ENCODE measurements at regions of chr9 and their contacts with region 1.

Region 1: GRCh38 chr9:92308893-92309292 is 15.4 kb upstream of the IARS1 start:
- DNase-seq: no peak
- ATAC-seq: no peak
- H3K4me3 ChIP-seq: no peak overlapping the region
- H3K27ac ChIP-seq: no peak overlapping the region
- H3K4me1 ChIP-seq: peaks cover 0 to 17% (median 11%) of the 10 kb centered on the region in 12 donors
- H3K27me3 ChIP-seq: no peaks in the 10 kb centered on the region
- CTCF ChIP-seq: no peak
- POLR2A ChIP-seq: no peak

Region 2: GRCh38 chr9:92254381-92255337 is 54.2 kb before region 1 on chr9:
- intact Hi-C with region 1: loop called in 1 of 10 experiments (anchors 10 kb)
- DNase-seq: no peak
- ATAC-seq: no peak
- H3K4me3 ChIP-seq: no peak overlapping the region
- H3K27ac ChIP-seq: no peak overlapping the region
- H3K4me1 ChIP-seq: no peaks in the 10 kb centered on the region
- H3K27me3 ChIP-seq: no peaks in the 10 kb centered on the region
- CTCF ChIP-seq: no peak
- POLR2A ChIP-seq: no peak

Region 3: GRCh38 chr9:92279302-92279701 is 29.6 kb before region 1 on chr9:
- intact Hi-C with region 1: no loop called
- DNase-seq: no peak
- ATAC-seq: no peak
- H3K4me3 ChIP-seq: no peak overlapping the region
- H3K27ac ChIP-seq: no peak overlapping the region
- H3K4me1 ChIP-seq: peaks cover 0 to 6% (median 0%) of the 10 kb centered on the region in 12 donors
- H3K27me3 ChIP-seq: no peaks in the 10 kb centered on the region
- CTCF ChIP-seq: no peak
- POLR2A ChIP-seq: no peak

Region 4: DNA sequence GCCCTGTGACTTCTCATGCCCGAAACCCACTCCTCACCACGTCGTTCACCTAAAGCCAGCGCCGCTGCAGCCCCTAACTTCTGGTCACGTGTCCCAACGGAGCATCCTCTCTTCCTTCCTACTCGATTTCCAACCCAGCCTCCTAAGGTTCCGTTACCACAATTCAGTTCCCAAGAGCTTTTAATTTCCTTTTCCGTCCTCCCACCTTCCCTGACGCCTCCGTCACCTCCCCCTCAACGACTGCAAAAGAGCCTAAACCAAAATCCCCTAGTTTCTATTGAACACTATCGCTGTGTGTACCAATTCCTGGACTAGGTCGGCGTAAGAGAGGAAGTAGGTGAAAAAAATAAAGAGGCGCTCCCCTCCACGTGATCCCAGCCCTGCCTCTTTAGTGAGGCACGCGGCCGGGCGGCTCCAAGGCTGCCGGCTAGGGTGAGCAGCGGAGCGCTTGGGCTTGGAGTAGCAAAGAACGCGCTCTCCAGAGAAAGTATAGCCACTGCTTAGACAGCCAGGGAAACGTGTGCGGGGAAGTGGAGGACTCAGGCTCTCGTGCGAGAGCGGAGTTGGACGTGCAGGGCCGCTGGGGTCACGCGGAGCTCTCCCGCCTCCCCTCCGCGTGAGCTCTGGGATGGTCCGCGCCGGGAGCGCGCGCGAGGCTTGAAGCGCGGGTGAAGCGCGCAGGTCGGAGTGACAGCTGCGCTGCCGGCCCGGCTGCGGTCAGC is 16.5 kb after region 1 on chr9 and contains the starts of genes CENPP and NOL8:
- intact Hi-C with region 1: no loop called
- DNase-seq: peak; percentile 86 to 91 (median 87)
- ATAC-seq: peak; percentile 98 to 99 (median 98)
- H3K4me3 ChIP-seq: peak within 1 kb of the TSS; percentile 53 to 90 (median 80)
- H3K27ac ChIP-seq: peak within 1 kb of the TSS; percentile 86 to 99 (median 96)
- H3K4me1 ChIP-seq: peaks cover 0 to 31% (median 16%) of the 10 kb centered on the region in 12 donors
- H3K27me3 ChIP-seq: no peaks in the 10 kb centered on the region
- CTCF ChIP-seq: no peak
- POLR2A ChIP-seq: no peak
- total RNA-seq, gene CENPP: 1.2 to 5.8 (median 3.1) TPM
- total RNA-seq, gene NOL8: 8.1 to 25.6 (median 18.1) TPM

Measured in heart left ventricle (tissue), 16 donors.